Calu3 (cell line): ENCODE measurements at regions of chr12 and their contacts with region 1.

Region 1: GRCh38 chr12:60072911-60073310 is 477.1 kb downstream of the SLC16A7 start:
- DNase-seq: no peak
- H3K4me3 Mint-ChIP-seq: no peak overlapping the region
- H3K27ac Mint-ChIP-seq: peak overlapping the region; percentile 38
- H3K4me1 Mint-ChIP-seq: peaks cover 26% of the 10 kb centered on the region
- H3K27me3 Mint-ChIP-seq: no peaks in the 10 kb centered on the region
- CTCF ChIP-seq: no peak

Region 2: DNA sequence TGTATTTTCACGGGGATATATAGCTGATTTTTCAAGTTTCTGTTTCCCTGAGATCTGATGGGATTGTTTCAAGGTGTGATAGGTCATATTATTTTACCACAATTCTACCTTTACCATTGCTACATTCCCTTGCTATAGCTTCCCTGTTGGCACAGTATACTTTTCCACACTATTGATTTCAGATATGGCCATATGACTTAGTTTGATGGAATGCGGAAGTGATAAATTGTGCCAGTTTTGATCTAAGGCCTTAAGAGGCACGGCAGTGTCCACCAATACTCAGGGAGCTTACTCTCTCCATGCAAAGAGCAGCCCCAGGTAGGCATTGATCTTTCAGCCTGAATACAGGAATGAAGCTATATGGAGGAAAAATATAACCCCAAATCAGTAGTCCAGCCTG is 161.4 kb before region 1 on chr12:
- CTCF ChIA-PET with region 1: no interaction called
- intact Hi-C with region 1: loop called (anchors 10 kb)
- DNase-seq: peak; percentile 58
- H3K4me3 Mint-ChIP-seq: peak overlapping the region; percentile 47
- H3K27ac Mint-ChIP-seq: peak overlapping the region; percentile 80
- H3K4me1 Mint-ChIP-seq: peaks cover 34% of the 10 kb centered on the region
- H3K27me3 Mint-ChIP-seq: no peaks in the 10 kb centered on the region
- CTCF ChIP-seq: no peak

Region 3: GRCh38 chr12:60123408-60124000 is 50.6 kb after region 1 on chr12:
- CTCF ChIA-PET with region 1: no interaction called
- intact Hi-C with region 1: no loop called
- DNase-seq: no peak
- H3K4me3 Mint-ChIP-seq: no peak overlapping the region
- H3K27ac Mint-ChIP-seq: no peak overlapping the region
- H3K4me1 Mint-ChIP-seq: peaks cover 22% of the 10 kb centered on the region
- H3K27me3 Mint-ChIP-seq: no peaks in the 10 kb centered on the region
- CTCF ChIP-seq: no peak

Region 4: DNA sequence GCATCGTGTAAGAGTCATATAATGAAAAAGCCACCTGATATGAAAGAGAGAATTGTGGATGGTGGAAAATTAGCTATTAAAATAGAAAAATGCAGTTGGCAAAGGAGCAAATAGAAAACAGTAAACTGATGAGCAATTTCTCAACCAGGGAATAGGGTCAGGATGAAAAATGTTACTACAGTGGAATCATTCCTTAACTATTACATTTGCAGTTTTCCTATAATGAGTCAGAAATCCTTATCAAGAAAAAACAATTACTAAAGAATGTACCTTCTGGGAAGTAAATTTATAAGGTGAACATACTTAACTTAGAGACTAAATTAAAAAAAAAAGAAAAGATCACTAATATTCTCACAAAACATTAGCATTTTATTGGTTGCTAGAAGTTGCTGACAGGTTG is 99.4 kb after region 1 on chr12:
- CTCF ChIA-PET with region 1: no interaction called
- intact Hi-C with region 1: loop called (anchors 2 kb)
- DNase-seq: no peak
- H3K4me3 Mint-ChIP-seq: peak overlapping the region; percentile 7
- H3K27ac Mint-ChIP-seq: peak overlapping the region; percentile 89
- H3K4me1 Mint-ChIP-seq: peaks cover 32% of the 10 kb centered on the region
- H3K27me3 Mint-ChIP-seq: no peaks in the 10 kb centered on the region
- CTCF ChIP-seq: no peak